ENCODE measurements at regions of chr18 and their contacts with region 1.

Region 1: DNA sequence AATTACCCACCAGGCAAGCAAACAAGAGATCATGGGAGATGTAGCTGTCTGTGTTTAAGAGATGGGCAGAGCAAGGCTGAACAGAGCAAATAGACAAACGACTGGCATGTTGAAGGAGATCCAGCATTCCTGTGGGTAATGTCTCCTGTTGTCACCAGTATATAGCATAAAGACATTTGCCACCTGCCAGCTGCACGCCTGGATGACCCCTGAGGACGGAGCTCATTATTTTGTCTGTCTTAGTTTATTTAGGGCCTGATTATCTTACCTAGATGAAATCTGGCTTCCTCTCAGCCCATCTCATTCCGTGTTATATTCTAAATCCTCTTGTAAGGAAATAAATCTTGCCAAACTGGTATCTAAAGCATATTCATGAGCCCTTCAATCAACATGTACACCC is 510.3 kb upstream of the LINC00305 start:
- DNase-seq: no peak
- ATAC-seq: no peak
- H3K4me3 ChIP-seq: no peak overlapping the region
- H3K27ac ChIP-seq: no peak overlapping the region
- H3K4me1 ChIP-seq: no peaks in the 10 kb centered on the region
- H3K27me3 ChIP-seq: no peaks in the 10 kb centered on the region
- CTCF ChIP-seq: no peak
- POLR2A ChIP-seq: no peak

Region 2: GRCh38 chr18:64678048-64678447 is 18.9 kb after region 1 on chr18:
- in situ Hi-C with region 1: no loop called
- intact Hi-C with region 1: loop called (anchors 1 kb)
- DNase-seq: no peak
- ATAC-seq: no peak
- H3K4me3 ChIP-seq: no peak overlapping the region
- H3K27ac ChIP-seq: no peak overlapping the region
- H3K4me1 ChIP-seq: no peaks in the 10 kb centered on the region
- H3K27me3 ChIP-seq: no peaks in the 10 kb centered on the region
- CTCF ChIP-seq: no peak
- POLR2A ChIP-seq: no peak